Naive thymus-derived CD8-positive, alpha-beta T cell (primary cell): ENCODE measurements at regions of chr12 and their contacts with region 1.

Region 1: GRCh38 chr12:48924617-48925303 is 532 bp downstream of the FKBP11 start:
- DNase-seq: peak; percentile 72 to 88 (median 80)
- ATAC-seq: peak; percentile 78 to 79
- H3K4me3 Mint-ChIP-seq: peak overlapping the region; percentile 88 to 99 (median 96)
- H3K27ac Mint-ChIP-seq: peak overlapping the region; percentile 94 to 99 (median 98)
- H3K4me1 Mint-ChIP-seq: peaks cover 22 to 52% (median 52%) of the 10 kb centered on the region in 4 donors
- H3K27me3 Mint-ChIP-seq: no peaks in the 10 kb centered on the region

Region 2: DNA sequence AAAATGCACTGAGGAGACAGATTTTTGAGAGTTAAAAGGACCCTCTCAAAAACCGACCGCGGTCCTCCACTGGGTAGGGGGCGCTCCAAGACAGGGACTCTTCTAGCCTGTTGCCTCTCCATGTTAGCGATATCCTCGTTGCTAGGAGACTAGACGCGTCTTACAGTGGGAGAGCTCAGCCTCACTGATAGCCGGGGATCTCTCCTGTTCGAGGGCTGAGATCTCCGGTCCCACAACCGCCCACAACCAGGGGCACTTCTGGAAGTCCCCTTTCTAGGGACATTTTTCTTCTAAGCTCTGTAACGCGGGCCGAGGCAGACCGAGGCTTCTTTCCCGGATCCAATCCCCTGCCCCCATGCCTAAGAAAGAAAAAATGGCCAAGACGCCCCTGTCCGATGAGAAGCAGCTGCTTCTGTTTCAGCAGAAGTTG is 20.8 kb before region 1 on chr12:
- POLR2A ChIA-PET with region 1: interaction called, 17 read pairs
- DNase-seq: peak; percentile 75 to 95 (median 82)
- ATAC-seq: peak; percentile 100
- H3K4me3 Mint-ChIP-seq: peak overlapping the region; percentile 56 to 86 (median 82)
- H3K27ac Mint-ChIP-seq: peak overlapping the region in 7 of 10 donors; percentile 15 to 94 (median 90)
- H3K4me1 Mint-ChIP-seq: peaks cover 0 to 4% (median 1%) of the 10 kb centered on the region in 4 donors
- H3K27me3 Mint-ChIP-seq: peaks cover 0 to 4% (median 0%) of the 10 kb centered on the region in 5 donors

Region 3: DNA sequence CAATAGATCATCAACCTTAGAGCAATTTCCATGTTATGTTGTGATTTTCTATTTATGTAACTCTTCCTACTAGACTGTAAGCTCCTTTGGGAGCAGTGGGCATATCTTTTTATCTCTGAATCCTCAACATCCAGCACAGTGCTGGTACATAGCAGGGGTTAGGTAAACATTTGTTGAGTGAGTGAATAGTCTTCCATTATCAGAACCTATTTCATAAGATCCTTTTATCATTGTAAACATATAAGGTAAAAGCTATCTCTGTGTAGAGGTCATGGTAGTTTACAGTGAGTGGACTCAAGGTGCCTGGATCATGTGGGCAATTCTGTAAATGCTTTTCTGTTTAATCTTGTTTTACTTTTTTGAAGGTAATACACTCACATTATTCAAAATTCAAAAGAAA is 14.6 kb before region 1 on chr12:
- POLR2A ChIA-PET with region 1: interaction called, 18 read pairs
- DNase-seq: no peak
- ATAC-seq: no peak
- H3K4me3 Mint-ChIP-seq: no peak overlapping the region
- H3K27ac Mint-ChIP-seq: no peak overlapping the region
- H3K4me1 Mint-ChIP-seq: no peaks in the 10 kb centered on the region
- H3K27me3 Mint-ChIP-seq: peaks cover 0 to 5% (median 0%) of the 10 kb centered on the region in 5 donors

Region 4: DNA sequence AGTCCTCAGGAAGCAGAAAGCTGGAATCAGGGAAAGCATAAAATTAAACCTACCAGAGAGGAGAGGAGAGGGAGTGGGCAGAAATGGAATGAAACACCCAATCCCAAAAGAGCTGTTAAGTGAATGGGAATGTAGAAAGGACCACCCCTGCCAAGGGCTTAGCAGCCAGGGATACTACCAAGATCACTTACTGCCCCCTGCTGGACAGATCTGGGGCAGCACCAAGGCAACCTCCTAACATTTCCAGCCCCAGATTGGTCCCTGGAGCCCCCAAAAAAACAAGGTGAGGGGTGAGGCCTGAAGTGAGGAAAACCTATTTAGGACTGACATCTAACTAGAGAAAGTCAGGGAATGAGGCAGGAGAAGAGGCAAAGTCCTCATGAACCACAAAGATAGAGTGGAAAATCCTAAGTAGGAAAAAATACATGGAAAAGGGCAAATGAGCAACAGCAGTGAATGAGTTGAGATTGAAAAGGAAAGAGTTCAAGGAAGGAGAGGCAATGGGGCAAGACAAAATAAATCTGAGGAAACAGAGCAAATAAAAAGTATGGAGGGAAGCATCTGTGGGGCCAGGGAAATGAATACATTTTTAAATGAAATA is 11.7 kb after region 1 on chr12:
- POLR2A ChIA-PET with region 1: interaction called, 22 read pairs
- DNase-seq: peak; percentile 73 to 91 (median 84)
- ATAC-seq: peak; percentile 68 to 84
- H3K4me3 Mint-ChIP-seq: no peak overlapping the region
- H3K27ac Mint-ChIP-seq: peak overlapping the region in 9 of 10 donors; percentile 59 to 93 (median 78)
- H3K4me1 Mint-ChIP-seq: peaks cover 20 to 58% (median 32%) of the 10 kb centered on the region in 4 donors
- H3K27me3 Mint-ChIP-seq: no peaks in the 10 kb centered on the region

Region 5: DNA sequence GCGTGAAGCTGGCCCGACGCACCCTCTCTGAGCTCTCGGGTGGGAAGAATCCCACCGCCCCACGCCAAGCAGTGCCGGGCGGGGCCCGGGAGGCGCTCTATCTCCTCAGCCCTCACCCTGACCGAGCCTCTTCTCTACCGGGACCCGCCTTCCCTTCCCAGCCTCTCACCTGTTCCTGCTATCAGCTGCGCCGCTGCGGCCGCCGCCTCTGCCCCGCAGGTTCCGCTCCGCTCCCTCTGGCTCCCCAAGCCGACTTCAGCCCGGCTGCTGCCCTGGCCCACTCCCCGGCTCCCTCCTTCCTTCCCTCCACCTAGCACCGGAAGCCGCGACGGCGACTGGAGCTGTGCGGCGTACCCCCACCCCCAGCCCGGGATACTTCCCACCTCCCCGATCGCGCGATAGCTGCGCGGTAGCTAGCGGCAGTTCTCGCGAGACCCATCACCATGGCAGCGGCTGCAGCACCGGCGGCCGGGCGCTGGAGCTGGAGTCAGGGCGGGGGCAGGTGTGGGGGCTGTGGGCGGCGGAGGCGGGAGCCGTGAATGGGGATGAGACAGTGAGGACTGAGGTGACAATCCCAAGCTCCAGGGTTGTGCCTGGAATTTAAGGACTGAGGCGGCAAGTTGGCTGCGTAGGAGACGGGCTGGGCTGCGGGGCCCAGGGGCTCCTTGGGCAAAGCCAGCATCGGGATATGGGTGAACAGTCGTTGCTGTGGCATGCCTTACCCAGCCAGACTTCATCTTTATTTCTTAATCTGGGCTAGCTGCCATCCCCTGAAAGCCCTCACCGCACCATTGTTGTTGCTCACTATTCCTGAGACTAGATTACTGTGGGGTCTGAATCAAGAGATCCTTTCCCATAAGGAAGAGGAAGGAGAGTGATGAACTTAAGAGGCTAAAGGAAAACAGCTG is 32.6 kb after region 1 on chr12 and contains the start of gene ARF3:
- POLR2A ChIA-PET with region 1: interaction called, 16 read pairs
- DNase-seq: peak; percentile 88 to 96 (median 92)
- ATAC-seq: peak; percentile 94
- H3K4me3 Mint-ChIP-seq: peak within 1 kb of the TSS; percentile 91 to 99 (median 98)
- H3K27ac Mint-ChIP-seq: peak within 1 kb of the TSS; percentile 86 to 97 (median 95)
- H3K4me1 Mint-ChIP-seq: peaks cover 26 to 54% (median 46%) of the 10 kb centered on the region in 4 donors
- H3K27me3 Mint-ChIP-seq: peaks cover 0 to 2% (median 0%) of the 10 kb centered on the region in 5 donors
- polyA plus RNA-seq, gene ARF3: 19.5 to 24.4 (median 21.8) TPM